ENCODE measurements at regions of chr3 and their contacts with region 1.

Region 1: DNA sequence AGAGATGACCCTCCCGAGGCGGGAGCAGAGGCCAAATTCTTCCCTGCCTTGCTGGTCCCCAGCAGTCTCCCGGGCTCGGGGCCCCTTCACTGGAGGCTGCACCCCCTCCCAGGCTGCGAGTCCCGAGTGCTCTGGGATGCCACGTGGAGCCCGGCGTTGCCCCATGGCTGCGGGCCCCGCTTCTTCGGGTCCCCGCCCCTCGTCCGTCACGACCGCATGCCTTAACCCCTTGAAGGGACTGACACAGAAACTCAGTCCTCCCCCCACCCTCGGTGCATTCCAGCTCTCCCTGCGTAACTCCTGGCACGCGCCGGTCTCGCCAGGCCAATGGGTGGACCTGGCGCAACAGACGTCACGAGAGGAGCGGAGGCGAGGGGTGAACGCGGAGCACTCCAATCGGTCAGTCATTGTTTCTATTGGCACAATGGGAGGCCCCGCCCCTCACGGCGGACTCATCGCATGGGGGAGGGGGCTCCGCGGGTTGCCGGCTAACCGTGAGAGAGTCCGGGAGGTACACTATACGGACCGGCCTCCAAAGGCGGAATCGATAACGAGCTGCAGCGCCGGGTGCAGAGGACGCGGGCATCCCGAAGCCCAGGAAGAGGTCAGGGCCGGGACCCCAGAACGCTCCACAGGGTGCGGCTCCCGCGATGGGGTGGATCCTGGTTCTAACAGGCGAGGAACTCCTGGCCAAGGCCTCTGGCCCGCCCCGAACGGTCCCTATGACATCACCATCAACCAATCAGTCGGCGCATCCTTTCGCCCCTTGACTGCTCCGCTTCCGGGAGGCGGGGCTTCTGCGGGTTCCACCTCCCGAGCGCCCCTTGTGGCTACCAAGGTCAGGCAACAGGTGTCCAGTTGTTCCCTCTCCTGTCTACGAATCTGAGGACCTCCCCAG is 978 bp upstream of the CELSR3 start:
- DNase-seq: peak; percentile 92
- H3K4me3 Mint-ChIP-seq: peak overlapping the region; percentile 95
- H3K27ac Mint-ChIP-seq: peak overlapping the region; percentile 96
- H3K4me1 Mint-ChIP-seq: peaks cover 15% of the 10 kb centered on the region
- H3K27me3 Mint-ChIP-seq: peaks cover 15% of the 10 kb centered on the region

Region 2: GRCh38 chr3:48394391-48394790 is 269.3 kb before region 1 on chr3:
- intact Hi-C with region 1: no loop called
- DNase-seq: no peak
- H3K4me3 Mint-ChIP-seq: no peak overlapping the region
- H3K27ac Mint-ChIP-seq: no peak overlapping the region
- H3K4me1 Mint-ChIP-seq: no peaks in the 10 kb centered on the region
- H3K27me3 Mint-ChIP-seq: peaks cover 17% of the 10 kb centered on the region

Region 3: GRCh38 chr3:48472915-48473616 is 190.6 kb before region 1 on chr3:
- intact Hi-C with region 1: loop called (anchors 1 kb)
- DNase-seq: peak; percentile 94
- H3K4me3 Mint-ChIP-seq: peak overlapping the region; percentile 82
- H3K27ac Mint-ChIP-seq: peak overlapping the region; percentile 95
- H3K4me1 Mint-ChIP-seq: peaks cover 64% of the 10 kb centered on the region
- H3K27me3 Mint-ChIP-seq: no peaks in the 10 kb centered on the region

Region 4: DNA sequence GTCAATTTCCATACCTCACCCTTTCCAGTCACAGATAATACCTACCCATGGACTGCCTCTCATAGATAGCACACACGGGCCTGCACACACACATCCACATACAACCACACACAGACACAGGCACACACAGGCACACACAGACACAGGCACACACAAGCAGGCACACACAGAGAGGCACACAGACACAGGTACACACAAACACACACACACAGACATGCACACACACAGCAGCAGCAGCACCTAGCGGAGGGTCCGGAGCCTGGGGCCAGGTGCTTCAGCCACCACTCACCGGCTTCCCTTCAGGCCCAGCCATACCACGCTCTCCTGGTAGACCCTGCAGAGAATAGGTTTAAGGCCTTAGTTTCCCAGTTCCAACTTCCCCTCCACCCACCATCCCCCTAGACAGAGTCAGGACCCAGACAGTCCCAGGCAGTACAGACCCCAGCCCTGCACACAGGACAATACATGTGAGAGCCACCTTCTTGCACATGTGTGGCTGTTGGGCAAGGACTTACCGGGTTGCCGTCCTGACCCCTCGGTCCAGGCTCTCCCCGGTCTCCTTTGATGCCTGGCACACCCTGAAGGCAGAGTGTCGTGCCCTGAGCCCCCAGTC is 89.6 kb before region 1 on chr3:
- intact Hi-C with region 1: no loop called
- DNase-seq: no peak
- H3K4me3 Mint-ChIP-seq: no peak overlapping the region
- H3K27ac Mint-ChIP-seq: no peak overlapping the region
- H3K4me1 Mint-ChIP-seq: no peaks in the 10 kb centered on the region
- H3K27me3 Mint-ChIP-seq: no peaks in the 10 kb centered on the region

Region 5: DNA sequence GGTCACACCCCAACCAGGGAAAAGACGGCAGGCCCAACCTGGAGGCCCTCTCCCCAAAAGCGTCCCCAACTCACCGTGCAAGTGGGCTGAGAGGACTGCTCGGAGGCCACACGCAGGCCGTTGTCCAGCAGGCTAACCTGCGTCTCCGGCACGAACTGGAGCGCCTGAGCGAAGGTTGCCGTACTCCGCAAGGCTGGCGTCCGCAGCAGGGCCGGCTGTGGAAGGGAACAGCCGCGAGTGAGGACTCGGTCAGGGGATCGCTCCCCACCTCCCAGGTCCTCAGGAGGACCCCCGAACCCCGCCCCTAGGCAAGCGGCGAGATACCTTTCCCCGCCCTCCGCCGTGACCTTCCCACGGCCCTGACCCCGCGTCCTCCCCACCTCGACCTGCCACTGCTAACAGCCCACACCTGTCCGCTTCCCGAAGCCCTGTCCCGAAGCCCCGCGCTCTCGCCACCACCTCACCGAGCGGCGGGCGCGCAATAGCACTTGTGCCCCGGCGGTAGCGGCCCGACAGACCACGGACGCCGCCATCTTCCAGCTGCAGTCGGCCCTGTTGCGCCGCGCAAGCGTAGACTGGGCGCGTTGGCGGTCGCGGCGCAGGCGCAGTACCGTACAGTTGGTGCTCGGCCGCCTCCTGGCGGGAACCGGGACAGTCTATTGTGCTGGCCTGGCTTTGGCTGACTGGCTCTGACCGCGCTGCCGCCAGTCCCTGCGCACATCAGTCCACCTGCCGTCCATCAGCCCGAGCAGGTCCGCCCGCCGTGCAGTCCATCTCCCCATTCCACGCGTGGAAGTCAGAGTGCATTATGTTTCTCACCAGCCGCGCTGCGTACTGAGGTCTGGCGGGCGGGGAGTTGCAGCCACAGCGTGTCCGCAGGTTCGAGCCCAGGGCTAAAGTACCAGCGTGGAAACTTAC is 54.3 kb before region 1 on chr3 and contains the start of gene UQCRC1:
- intact Hi-C with region 1: loop called (anchors 1 kb)
- DNase-seq: peak; percentile 92
- H3K4me3 Mint-ChIP-seq: peak within 1 kb of the TSS; percentile 100
- H3K27ac Mint-ChIP-seq: peak within 1 kb of the TSS; percentile 97
- H3K4me1 Mint-ChIP-seq: peaks cover 22% of the 10 kb centered on the region
- H3K27me3 Mint-ChIP-seq: peaks cover 2% of the 10 kb centered on the region
- total RNA-seq, gene UQCRC1: 191 and 193 TPM in 2 replicates

Region 6: DNA sequence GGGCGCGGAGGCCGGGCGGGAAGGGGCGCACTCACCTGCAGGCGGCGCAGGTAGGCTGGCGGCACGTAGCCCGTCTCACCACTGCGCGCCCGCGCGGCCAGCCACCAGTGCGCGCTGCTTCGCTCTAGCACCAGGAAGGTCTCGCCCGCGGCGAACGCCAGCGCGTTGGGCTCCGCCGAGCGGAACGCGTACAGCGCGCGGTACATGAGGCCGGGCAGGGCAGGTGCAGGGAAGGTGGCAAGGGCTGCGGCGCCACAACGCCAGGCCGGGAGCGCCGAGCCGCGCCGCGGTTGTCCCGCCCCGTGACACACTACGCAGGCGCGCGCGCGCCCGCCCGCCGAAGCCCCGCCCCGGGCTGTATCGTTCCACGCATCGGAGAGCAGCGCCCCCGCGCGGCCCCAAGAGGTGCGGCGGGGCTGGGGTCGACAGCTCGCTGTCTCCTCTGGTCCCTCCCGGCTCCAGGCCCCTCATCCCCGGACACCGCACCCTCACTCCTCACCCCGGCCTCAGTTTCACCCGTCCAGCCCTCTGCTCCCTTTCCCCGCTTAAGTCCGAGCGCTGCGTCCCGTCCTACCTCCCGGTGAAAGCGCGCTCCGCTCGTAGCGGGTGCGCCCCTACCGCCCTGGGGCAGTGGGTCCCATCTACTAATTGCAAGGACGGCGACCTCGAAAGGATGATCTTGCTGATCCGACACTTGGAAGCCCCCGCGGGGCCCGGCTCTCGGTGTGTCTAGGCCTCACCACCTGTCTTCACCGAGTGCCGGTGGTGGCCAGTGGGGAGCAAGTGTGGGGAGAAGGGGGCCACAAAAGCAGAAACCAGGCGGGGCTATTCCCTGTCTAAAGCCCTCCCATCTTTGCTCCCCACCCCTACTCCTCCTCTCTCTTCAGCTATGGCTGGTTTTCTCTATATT is 22.2 kb after region 1 on chr3 and contains the start of gene NCKIPSD:
- intact Hi-C with region 1: loop called (anchors 1 kb)
- DNase-seq: peak; percentile 85
- H3K4me3 Mint-ChIP-seq: peak within 1 kb of the TSS; percentile 97
- H3K27ac Mint-ChIP-seq: peak within 1 kb of the TSS; percentile 95
- H3K4me1 Mint-ChIP-seq: peaks cover 38% of the 10 kb centered on the region
- H3K27me3 Mint-ChIP-seq: no peaks in the 10 kb centered on the region
- total RNA-seq, gene NCKIPSD: 40.8 and 45.5 TPM in 2 replicates

Measured in activated T-helper 1 cell treated with anti-CD3 and anti-CD28 coated beads, Interleukin-12 subunit alpha, Interleukin-12 subunit beta, Interleukin-2, Interleukin-4 antibody, amounts not matched to agents 30 ng/mL and 10 ng/mL and 1 ng/mL, durations not matched to agents 14 hours and 24 hours and 36 hours (primary cell).